Upper lobe of right lung (tissue), 1 donor: ENCODE measurements at regions of chr7 and their contacts with region 1.

Region 1: GRCh38 chr7:14457568-14458453 is 444.7 kb downstream of the DGKB start:
- DNase-seq: peak; percentile 63
- ATAC-seq: peak; percentile 94
- H3K4me3 ChIP-seq: no peak overlapping the region
- H3K27ac ChIP-seq: no peak overlapping the region
- H3K4me1 ChIP-seq: no peaks in the 10 kb centered on the region
- H3K27me3 ChIP-seq: no peaks in the 10 kb centered on the region
- CTCF ChIP-seq: peak; percentile 83

Region 2: GRCh38 chr7:13279854-13280435 is 1177.9 kb before region 1 on chr7:
- intact Hi-C with region 1: loop called (anchors 10 kb)
- DNase-seq: no peak
- ATAC-seq: no peak
- H3K4me3 ChIP-seq: no peak overlapping the region
- H3K27ac ChIP-seq: no peak overlapping the region
- H3K4me1 ChIP-seq: no peaks in the 10 kb centered on the region
- H3K27me3 ChIP-seq: no peaks in the 10 kb centered on the region
- CTCF ChIP-seq: peak; percentile 50

Region 3: DNA sequence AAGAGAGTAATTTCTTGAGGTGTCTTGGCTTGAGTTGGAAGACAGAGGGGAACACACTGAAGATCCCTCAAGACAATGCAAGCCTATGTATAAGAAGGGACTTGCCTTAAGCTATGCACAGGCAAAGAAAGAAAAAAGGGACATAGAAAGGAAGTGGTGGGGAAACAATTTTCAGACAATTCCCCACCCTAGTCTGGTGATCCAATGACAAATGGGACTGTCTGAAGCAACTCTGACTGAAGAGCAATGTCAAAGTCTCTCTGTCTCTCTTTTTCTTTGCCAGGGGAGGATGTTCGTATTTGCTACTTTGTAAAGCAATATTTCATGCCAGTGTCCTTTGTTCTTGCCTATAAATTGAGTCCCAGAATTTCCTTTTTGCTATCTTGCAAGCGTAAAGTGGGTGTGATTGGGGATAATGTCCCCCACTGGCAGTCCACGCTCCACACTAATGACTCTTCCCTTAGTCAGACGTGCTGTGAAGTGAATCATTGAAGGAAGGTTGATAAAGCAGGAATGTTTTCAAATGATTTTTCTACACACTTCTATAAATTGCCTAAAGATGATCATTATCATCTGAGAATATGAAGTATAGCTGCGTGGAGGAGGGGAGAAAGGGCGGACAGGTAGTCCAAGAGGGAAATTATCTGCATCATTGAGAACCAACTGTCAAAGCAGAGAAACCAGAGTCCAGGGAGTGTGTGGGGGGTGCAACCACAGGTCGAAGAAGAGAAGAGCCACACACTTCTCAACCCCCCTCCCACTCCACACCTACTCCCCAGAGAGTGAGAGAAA is 224.5 kb before region 1 on chr7:
- intact Hi-C with region 1: no loop called
- DNase-seq: no peak
- ATAC-seq: no peak
- H3K4me3 ChIP-seq: no peak overlapping the region
- H3K27ac ChIP-seq: no peak overlapping the region
- H3K4me1 ChIP-seq: no peaks in the 10 kb centered on the region
- H3K27me3 ChIP-seq: no peaks in the 10 kb centered on the region
- CTCF ChIP-seq: no peak

Region 4: DNA sequence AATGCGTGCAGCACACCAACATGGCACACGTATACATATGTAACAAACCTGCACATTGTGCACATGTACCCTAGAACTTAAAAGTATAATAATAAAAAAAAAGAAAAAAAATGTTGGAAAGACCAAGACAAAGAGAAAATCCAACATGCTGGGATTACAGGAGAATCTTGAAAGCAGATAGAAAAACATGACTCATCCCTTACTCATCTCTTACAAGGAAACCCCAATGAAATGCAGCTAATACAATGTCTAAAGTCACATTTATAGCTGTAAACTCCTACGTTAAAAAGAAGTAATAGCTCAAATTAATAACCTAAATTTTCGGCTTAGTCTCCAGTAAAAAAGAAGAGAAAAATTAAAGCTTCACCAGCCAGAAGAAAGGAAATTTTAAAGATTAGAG is 492.2 kb after region 1 on chr7:
- intact Hi-C with region 1: no loop called
- DNase-seq: no peak
- ATAC-seq: no peak
- H3K4me3 ChIP-seq: no peak overlapping the region
- H3K27ac ChIP-seq: no peak overlapping the region
- H3K4me1 ChIP-seq: no peaks in the 10 kb centered on the region
- H3K27me3 ChIP-seq: no peaks in the 10 kb centered on the region
- CTCF ChIP-seq: no peak